HAP-1 (cell line): ENCODE measurements at regions of chr11 and their contacts with region 1.

Region 1: DNA sequence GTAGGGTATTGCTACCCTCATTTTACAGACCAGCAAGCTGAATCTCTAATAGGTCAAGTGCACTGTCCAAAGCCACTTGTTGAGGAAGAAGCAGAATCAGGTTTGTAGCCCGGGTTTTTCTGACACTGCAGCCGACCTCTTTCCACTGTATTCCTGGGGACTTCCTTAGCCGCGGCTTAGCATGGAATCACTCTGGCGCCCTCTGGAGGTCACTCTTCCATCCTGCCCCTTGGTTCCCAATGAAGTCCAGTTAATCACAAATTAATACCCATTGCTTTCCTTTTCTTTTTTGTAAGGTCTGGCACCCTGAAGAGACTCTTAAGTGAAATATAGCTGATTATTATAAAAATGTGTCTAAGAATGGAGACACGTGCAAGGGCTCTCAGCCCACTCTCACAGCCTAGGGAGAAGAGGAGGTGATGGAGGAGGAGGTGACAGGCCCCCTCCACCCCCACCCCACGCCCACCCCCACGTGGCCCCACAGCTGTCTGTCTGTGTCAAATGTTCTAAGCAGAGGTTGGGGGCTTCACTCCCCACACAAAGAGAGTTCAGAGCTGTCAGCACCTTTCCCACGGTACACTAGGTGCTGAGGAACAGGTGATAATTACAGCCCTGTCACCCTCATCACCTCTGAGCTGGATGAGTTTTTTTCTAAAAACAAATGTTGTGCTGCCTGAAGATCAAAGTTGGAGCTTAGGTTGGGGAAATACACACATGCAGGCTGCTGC is 57.7 kb upstream of the DRD2 start:
- DNase-seq: peak; percentile 43 to 86
- H3K4me3 ChIP-seq: no peak overlapping the region
- H3K4me1 ChIP-seq: no peaks in the 10 kb centered on the region
- H3K27me3 ChIP-seq: peaks cover 11% of the 10 kb centered on the region; the same call in 1 of the 2 replicates

Region 2: GRCh38 chr11:113314389-113315301 is 218.2 kb before region 1 on chr11 and contains the start of gene TTC12:
- in situ Hi-C with region 1: loop called (anchors 10 kb)
- DNase-seq: no peak
- H3K4me3 ChIP-seq: no peak within 1 kb of the TSS
- H3K4me1 ChIP-seq: no peaks in the 10 kb centered on the region
- H3K27me3 ChIP-seq: no peaks in the 10 kb centered on the region

Region 3: GRCh38 chr11:113603277-113604059 is 70.6 kb after region 1 on chr11:
- in situ Hi-C with region 1: no loop called
- DNase-seq: no peak
- H3K4me3 ChIP-seq: no peak overlapping the region
- H3K4me1 ChIP-seq: no peaks in the 10 kb centered on the region
- H3K27me3 ChIP-seq: peaks cover 2% of the 10 kb centered on the region; the same call in 1 of the 2 replicates

Region 4: GRCh38 chr11:113752932-113753331 is 220.1 kb after region 1 on chr11:
- in situ Hi-C with region 1: no loop called
- DNase-seq: no peak
- H3K4me3 ChIP-seq: no peak overlapping the region
- H3K4me1 ChIP-seq: no peaks in the 10 kb centered on the region
- H3K27me3 ChIP-seq: no peaks in the 10 kb centered on the region